Endothelial cell of umbilical vein (primary cell): ENCODE measurements at regions of chr16 and their contacts with region 1.

Region 1: DNA sequence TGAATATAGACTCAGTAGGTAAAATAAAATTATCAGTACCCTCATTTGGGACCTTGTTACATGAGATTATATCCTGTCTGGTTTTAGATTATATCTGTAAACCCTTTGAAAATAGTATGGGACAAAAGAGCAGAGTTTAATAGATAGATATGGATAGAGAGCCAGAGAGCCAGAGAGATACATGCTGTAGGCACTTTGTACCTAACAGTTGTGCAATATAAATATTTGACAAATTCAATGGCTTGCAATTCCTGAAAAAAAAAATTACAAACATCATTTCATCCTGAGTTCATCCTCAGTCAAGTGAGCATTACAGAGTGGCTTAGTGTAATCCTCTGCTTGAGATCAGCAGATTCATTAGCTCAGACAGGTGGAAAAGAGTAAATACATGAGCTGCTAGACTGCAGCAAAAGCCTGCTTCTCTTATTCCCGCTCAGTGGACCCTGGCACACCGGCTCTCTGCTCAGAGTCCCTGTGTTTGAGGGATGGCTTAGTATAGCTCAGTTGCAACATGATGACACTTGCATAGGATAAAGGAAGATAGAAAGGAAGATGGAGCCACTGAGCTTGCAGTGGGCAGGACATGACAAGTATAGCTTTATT is 931.6 kb upstream of the GOT2 start:
- DNase-seq: no peak
- H3K4me3 ChIP-seq: no peak overlapping the region
- H3K27ac ChIP-seq: no peak overlapping the region
- H3K4me1 ChIP-seq: no peaks in the 10 kb centered on the region
- H3K27me3 ChIP-seq: no peaks in the 10 kb centered on the region
- CTCF ChIP-seq: no peak
- POLR2A ChIP-seq: no peak

Region 2: GRCh38 chr16:58999762-59000161 is 666.0 kb before region 1 on chr16:
- CTCF ChIA-PET with region 1: no interaction called
- POLR2A ChIA-PET with region 1: no interaction called
- dilution Hi-C with region 1: no loop called
- intact Hi-C with region 1: loop called (anchors 5 kb)
- DNase-seq: no peak
- H3K4me3 ChIP-seq: no peak overlapping the region
- H3K27ac ChIP-seq: no peak overlapping the region
- H3K4me1 ChIP-seq: no peaks in the 10 kb centered on the region
- H3K27me3 ChIP-seq: no peaks in the 10 kb centered on the region
- CTCF ChIP-seq: no peak
- POLR2A ChIP-seq: no peak

Region 3: DNA sequence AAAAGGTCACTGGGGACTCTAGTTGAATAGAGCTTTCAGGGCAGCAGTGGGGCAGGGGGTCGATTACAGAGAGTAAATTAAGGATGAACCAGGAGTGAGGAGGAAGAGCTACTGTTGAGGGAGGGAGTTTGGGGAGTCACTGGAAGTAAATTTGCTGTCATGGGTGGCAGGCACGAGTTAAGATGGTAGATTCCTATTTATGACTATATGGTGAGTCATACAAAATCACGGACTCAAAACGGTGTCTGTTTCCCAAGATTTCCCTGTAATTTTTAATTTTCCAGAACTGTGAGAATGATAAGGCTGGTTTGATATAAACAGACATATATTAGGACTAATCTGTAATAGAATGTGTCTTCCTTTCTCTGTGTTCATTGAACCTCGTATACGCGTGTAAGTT is 644.0 kb before region 1 on chr16:
- CTCF ChIA-PET with region 1: no interaction called
- POLR2A ChIA-PET with region 1: no interaction called
- dilution Hi-C with region 1: no loop called
- intact Hi-C with region 1: no loop called
- DNase-seq: no peak
- H3K4me3 ChIP-seq: no peak overlapping the region
- H3K27ac ChIP-seq: no peak overlapping the region
- H3K4me1 ChIP-seq: no peaks in the 10 kb centered on the region
- H3K27me3 ChIP-seq: no peaks in the 10 kb centered on the region
- CTCF ChIP-seq: no peak
- POLR2A ChIP-seq: no peak

Region 4: GRCh38 chr16:59632276-59632855 is 33.4 kb before region 1 on chr16:
- CTCF ChIA-PET with region 1: no interaction called
- POLR2A ChIA-PET with region 1: no interaction called
- dilution Hi-C with region 1: no loop called
- intact Hi-C with region 1: loop called (anchors 1 kb)
- DNase-seq: peak; percentile 81
- H3K4me3 ChIP-seq: no peak overlapping the region
- H3K27ac ChIP-seq: peak overlapping the region; percentile 38
- H3K4me1 ChIP-seq: peaks cover 50% of the 10 kb centered on the region
- H3K27me3 ChIP-seq: no peaks in the 10 kb centered on the region
- CTCF ChIP-seq: no peak
- POLR2A ChIP-seq: peak; percentile 40

Region 5: DNA sequence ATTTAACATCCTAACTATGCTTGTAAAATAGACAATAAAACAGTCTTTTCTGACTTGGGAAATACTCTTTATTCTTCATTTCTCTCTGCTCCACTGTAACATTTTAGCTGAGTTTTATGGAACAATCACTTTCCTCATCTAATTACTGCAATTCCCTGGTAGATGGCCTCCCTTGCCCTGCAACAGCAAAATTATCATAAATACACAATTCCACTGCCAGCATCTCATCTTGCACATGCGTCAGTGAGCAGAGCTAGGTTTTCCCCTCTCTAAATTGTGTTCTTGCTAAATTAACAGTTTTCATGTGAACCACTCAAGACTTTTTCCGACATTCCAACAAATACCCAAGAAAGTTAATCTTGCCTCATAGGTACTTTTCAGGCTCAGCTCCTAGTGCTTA is 10.7 kb before region 1 on chr16:
- CTCF ChIA-PET with region 1: no interaction called
- POLR2A ChIA-PET with region 1: no interaction called
- dilution Hi-C with region 1: no loop called
- intact Hi-C with region 1: no loop called
- DNase-seq: no peak
- H3K4me3 ChIP-seq: no peak overlapping the region
- H3K27ac ChIP-seq: no peak overlapping the region
- H3K4me1 ChIP-seq: no peaks in the 10 kb centered on the region
- H3K27me3 ChIP-seq: no peaks in the 10 kb centered on the region
- CTCF ChIP-seq: no peak
- POLR2A ChIP-seq: no peak